ENCODE measurements at regions of chr7 and their contacts with region 1.

Region 1: GRCh38 chr7:106461993-106462859 is 177.4 kb upstream of the NAMPT start:
- DNase-seq: peak; percentile 8
- H3K4me3 ChIP-seq: no peak overlapping the region
- H3K27ac ChIP-seq: no peak overlapping the region
- H3K27me3 ChIP-seq: no peaks in the 10 kb centered on the region
- CTCF ChIP-seq: peak; percentile 59

Region 2: GRCh38 chr7:106166655-106167342 is 295.4 kb before region 1 on chr7:
- CTCF ChIA-PET with region 1: interaction called, 287 read pairs
- POLR2A ChIA-PET with region 1: no interaction called
- DNase-seq: peak; percentile 66
- H3K4me3 ChIP-seq: no peak overlapping the region
- H3K27ac ChIP-seq: no peak overlapping the region
- H3K27me3 ChIP-seq: peaks cover 13% of the 10 kb centered on the region
- CTCF ChIP-seq: peak; percentile 84

Region 3: DNA sequence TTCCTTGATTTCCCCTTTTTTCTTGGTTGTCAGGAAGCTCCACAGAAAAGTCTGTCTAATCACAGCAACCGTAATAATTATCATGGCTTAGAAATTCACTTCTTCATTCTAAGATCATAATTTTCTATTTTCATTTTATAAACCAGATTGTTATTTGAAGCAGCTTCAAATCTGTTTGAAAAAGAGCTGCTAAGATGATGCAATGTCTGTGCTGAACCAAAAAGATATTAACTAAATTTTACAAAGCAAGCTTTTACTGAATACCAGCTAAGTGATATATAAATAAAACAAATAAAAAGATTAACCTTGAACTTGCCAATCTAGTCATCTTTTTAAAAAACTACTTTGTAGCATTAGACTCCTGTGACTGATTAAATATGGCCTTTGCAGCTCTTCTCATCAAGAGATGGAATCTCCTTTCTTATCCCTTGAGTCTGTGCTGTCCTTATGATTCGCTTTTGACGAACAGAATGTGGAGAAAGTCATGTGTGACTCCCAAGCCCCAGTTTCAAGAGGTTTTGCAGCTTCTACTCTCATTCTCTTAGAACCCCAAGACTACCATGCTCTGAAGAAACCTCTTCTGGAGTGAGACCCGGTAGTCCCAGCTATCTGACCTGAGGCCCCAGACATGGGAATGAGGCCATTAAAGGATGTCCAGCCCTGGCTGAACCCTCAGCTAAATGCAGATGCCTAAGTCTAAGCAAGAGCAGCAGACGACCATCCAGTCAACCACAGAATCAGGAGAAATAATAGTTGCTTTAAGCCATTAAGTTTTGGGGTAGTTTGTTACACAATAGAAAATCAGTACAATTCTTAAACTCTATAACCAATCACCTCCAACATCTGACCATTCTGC is 191.9 kb before region 1 on chr7:
- CTCF ChIA-PET with region 1: interaction called, 11 read pairs
- POLR2A ChIA-PET with region 1: no interaction called
- DNase-seq: no peak
- H3K4me3 ChIP-seq: no peak overlapping the region
- H3K27ac ChIP-seq: no peak overlapping the region
- H3K27me3 ChIP-seq: no peaks in the 10 kb centered on the region
- CTCF ChIP-seq: no peak

Region 4: GRCh38 chr7:106278695-106279094 is 183.5 kb before region 1 on chr7:
- CTCF ChIA-PET with region 1: interaction called, 5 read pairs
- POLR2A ChIA-PET with region 1: interaction called, 11 read pairs
- DNase-seq: no peak
- H3K4me3 ChIP-seq: no peak overlapping the region
- H3K27ac ChIP-seq: no peak overlapping the region
- H3K27me3 ChIP-seq: no peaks in the 10 kb centered on the region
- CTCF ChIP-seq: no peak